SK-MEL-5 (cell line): ENCODE measurements at regions of chr1 and their contacts with region 1.

Region 1: DNA sequence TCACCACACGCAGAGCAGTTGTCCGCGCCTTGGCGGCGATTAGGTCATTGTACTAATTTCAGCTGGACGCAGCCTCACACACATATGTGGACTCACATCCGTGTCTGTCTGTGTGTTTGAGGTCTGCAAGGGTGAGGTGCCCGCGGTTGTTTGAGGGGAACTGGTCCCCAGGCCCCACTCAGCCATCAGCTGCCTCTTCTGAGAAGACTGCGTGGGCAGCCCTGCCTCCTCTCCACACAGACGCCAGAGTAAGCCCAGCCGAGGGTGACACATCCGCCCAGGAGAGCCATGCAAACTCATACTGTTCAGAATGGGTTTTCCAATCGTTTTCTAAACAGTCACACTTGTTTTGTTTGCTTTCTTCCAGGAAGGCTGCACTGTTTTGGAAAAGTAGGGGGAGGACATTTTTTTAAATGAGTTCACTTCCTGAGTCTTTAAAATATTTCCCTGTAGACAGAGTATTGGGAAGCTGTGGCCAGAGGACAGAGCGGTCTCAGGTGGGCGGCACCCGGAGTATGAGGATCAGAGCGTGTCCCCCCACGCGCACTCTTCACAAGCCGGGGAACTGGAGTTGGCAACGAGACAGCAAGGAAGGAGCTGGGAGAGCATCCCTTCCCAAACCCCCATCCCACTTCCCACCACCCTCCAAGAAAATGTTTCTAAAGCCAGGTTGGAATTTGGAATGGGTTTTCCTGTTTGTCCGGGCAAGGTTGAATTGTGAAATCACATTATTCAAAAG is 53.3 kb downstream of the TOMM20 start:
- DNase-seq: no peak

Region 2: DNA sequence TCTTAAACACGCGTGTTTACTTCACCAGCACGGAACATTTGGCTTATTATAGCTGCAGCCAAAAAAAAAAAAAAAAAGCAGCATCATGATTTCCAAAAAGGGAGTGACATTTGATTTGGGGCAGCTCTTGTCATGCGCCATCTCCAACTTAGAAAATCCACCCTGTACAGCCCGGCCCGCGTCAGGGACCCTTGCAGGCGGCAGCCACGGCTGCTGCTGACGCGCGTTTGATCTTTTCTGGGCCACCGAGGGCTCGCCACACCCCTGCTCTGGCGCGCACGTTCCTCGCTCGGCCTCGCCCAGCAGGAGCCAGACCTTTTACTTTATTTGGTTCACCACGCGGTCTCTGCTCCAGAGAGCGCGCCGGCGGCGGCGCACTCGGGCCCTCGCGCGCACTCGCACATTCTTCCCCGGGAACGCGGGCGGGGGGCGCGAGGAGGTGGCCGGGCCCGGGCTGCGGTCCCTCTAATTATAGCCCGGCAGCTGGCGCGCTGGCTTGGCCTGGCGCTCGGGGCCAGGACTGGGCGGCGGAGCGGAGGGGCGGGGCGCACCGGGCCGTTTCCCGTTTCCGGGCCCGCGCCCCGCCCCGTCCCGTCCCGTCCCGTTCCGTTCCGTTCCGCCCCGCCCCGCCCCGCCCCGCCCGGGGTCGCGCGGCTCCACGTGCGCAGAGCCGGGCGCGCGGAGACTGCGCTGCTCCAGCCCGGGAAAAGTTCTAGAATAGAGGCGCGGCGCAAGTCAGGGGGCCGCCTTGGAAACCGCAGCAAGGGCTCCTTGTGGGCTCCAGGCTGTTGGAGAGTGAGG is 475.5 kb before region 1 on chr1:
- in situ Hi-C with region 1: loop called (anchors 10 kb)
- DNase-seq: peak; percentile 84

Region 3: DNA sequence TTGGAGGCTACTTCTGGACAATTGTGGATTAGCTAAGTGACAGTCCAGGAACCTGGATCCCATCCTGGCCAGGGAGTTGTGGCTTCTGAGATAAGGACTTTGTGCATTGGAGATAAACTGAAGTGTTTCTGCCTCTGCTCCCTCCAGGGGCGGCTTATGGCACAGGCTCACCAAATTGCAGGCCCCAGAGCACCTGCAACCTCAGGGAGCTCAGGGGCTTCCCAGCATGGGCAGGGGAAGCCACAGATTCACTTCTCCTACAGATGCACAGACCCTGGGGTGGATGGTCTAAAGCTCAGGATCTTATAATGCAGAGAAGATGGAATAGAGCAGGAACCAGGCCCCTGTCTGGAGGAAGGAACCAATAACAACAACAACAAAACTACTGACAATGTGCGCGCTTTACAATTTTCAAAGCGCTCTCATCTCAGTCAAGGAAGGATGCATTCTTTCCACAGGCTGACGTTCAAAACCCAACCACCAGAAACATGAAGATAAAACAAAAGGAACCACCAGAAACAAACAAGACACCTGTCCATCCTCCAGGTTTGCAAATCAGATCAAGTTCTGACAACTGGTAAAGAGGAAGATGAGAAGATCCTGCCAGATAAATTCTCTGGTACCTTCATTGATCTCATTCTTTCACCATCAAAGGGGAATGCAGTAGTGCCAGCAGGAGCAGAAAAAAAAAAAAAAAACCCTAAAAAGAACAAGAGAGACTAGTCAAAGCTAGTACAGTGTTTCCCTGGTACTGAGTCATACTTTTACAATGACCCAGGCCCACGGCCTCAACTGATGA is 344.4 kb before region 1 on chr1:
- in situ Hi-C with region 1: loop called (anchors 25 kb)
- DNase-seq: no peak

Region 4: DNA sequence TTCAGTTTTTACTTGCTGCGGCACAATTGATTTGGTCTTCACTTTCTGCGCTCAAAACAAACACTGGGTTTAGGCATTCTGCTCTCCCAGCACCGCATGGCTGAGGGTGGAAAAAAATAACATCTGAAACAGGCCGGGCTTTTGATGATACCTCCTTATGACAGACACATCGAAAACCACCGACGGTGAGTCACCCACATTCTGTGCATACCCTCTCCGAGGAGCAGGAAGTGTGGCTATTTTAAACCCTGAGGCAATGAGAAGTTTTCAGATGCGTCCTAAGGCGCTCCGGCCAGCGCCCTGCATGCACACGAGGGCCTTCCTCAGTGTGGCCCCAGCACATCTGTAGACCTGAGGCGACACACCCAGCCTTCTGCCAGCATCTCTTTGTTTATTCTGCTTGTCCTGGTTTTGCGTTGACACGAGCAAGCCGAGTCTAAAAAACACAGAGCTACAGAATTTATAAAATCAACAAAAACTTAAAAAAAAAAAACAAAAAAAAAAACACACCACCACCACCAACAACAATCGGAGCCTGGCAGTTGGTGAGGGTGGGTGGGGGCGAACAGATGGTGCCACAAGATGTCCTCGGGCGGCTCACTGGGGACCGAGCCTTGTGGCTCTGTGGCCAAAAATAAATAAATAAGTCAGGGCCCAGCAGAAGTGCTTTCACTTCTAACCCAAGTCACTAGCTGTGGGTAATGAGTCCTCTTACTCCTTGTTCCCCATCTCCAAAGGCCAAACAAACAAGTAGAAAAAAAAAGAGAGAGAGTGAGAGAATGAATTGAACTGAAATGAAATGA is 302.8 kb before region 1 on chr1:
- in situ Hi-C with region 1: no loop called
- DNase-seq: peak; percentile 94

Region 5: DNA sequence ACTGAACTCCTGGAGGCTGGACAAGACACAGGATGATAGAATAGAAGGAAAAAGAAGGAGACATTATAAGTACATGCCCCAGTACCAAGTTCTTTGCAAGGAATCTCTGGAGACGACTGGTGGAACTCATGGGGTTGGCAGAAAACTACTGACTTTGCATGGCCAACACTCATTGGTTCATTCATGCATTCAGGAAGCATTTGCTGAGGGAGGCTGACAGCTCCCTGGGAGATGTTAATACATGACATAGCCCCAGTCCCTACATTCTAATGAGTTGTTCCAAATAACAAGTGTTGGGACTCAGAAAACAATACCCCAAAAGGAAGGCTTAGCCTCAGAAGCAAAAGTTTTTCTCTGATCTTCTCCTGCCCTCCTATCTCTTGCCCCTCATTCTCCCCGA is 292.6 kb before region 1 on chr1:
- in situ Hi-C with region 1: no loop called
- DNase-seq: no peak

Region 6: GRCh38 chr1:235128456-235129328 is 53.3 kb after region 1 on chr1 and contains the start of gene TOMM20:
- in situ Hi-C with region 1: no loop called
- DNase-seq: peak; percentile 98
- total RNA-seq, gene TOMM20: 110 and 117 TPM in 2 replicates